ENCODE measurements at regions of chr3 and their contacts with region 1.

Region 1: DNA sequence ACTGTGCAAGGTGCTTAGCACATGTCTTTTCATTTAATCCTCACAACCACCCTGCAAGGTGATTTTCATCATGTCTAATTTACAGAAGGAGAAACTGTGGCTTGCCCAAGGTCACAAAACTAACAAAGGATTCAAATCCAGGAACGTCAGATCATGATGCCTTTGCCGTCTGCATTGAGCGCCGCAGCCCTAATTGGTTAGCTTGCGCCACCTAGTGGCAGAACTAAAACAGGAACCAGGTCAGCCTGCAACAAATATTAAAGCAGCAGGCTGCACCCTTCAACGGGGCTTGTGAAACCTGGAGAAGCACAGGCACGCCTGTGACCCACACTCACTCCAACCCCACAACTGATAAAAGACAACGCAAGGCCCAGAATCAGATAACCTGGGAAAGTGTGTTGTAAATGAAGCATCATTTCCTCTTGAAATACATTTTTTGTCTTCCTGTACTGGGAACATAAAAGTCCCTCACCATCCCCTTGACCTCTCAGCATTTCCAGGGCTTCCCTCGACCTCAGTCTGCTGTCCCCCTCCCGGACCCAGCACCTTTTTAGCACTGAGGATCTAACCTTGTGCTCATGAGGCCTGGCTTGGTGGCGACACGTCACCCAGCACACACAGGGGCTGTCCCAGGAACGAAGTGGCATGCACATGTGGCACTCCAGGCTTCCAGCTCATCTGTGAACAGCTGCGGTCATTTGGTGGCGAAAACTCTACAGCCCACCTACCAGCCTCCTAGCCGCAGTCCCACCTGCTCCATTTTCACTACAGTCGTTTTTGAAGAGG is 17.3 kb downstream of the DPH3 start:
- DNase-seq: peak; percentile 43
- ATAC-seq: peak; percentile 94
- H3K4me3 ChIP-seq: no peak overlapping the region
- H3K27ac ChIP-seq: no peak overlapping the region
- H3K4me1 ChIP-seq: peaks cover 7% of the 10 kb centered on the region
- H3K27me3 ChIP-seq: no peaks in the 10 kb centered on the region
- CTCF ChIP-seq: peak; percentile 84 to 97 (median 90)
- EP300 ChIP-seq: peak; percentile 29 to 50; a peak in 1 of 4 replicates
- POLR2A ChIP-seq: no peak
- RAD21 ChIP-seq: peak; percentile 94

Region 2: DNA sequence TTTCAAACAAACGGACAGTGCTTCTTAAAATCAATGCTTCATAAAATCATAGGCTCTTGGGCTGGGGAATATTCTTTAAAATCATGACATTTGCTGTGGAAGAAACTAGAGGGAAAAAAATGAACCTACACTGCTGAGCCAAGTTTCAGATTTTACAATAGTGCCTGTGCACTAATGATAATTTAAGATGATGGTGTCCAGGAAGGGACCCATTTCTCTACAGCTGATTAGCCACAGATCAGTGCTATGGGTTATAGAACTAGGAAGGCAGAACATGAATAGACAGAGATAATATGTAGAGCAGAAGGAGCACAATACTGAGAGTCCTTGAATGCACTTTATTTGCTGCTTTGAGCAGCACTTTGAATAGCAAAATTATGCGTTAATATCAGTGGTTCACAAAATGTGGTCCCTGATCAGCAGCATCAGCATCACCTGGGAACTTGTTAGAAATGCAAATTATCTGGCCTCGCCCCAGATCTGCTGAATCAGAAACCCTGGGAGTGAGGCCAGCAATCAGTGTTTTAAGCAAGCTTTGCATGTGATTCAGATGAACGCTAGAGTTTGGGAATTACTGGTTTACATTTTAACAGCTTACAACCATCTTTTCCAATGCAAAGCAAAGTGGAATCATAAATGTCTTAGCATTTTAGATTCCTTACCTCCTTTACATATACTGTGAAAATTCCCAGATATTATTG is 313.9 kb before region 1 on chr3:
- CTCF ChIA-PET with region 1: no interaction called
- POLR2A ChIA-PET with region 1: no interaction called
- RAD21 ChIA-PET with region 1: no interaction called
- SMC1A ChIA-PET with region 1: no interaction called
- in situ Hi-C with region 1: no loop called
- intact Hi-C with region 1: no loop called
- DNase-seq: no peak
- ATAC-seq: no peak
- H3K4me3 ChIP-seq: no peak overlapping the region
- H3K27ac ChIP-seq: no peak overlapping the region
- H3K4me1 ChIP-seq: no peaks in the 10 kb centered on the region
- H3K27me3 ChIP-seq: no peaks in the 10 kb centered on the region
- CTCF ChIP-seq: no peak
- EP300 ChIP-seq: no peak
- POLR2A ChIP-seq: no peak
- RAD21 ChIP-seq: no peak

Region 3: GRCh38 chr3:16177962-16178627 is 69.4 kb before region 1 on chr3:
- CTCF ChIA-PET with region 1: interaction called, 8 read pairs
- POLR2A ChIA-PET with region 1: no interaction called
- RAD21 ChIA-PET with region 1: interaction called, 3 read pairs
- SMC1A ChIA-PET with region 1: interaction called, 3 read pairs
- in situ Hi-C with region 1: no loop called
- intact Hi-C with region 1: loop called (anchors 1 kb)
- DNase-seq: no peak
- ATAC-seq: peak; percentile 96
- H3K4me3 ChIP-seq: no peak overlapping the region
- H3K27ac ChIP-seq: no peak overlapping the region
- H3K4me1 ChIP-seq: no peaks in the 10 kb centered on the region
- H3K27me3 ChIP-seq: peaks cover 0 to 3% of the 10 kb centered on the region in 2 experiments; a peak in 2 of 4 replicates
- CTCF ChIP-seq: peak; percentile 89 to 99 (median 98)
- EP300 ChIP-seq: no peak
- POLR2A ChIP-seq: no peak
- RAD21 ChIP-seq: peak; percentile 95

Region 4: DNA sequence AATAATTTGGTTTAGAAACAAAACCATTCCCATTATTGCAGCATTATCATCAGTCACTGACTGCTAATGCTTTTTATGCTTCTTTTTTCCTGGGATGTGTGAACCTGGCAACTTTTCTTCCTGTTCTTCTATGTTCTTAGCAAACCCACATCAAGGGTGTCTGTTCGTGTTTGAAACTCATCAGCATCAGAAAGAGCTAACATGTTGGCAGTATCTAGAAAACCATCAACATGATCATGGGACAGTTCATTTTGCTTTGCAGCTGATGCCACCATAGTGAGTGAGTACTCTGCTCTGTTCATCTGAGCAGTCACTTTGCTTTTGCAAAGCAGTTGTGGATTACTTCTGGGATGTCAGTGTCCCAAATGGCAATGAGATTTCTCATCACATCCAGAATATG is 11.4 kb after region 1 on chr3:
- CTCF ChIA-PET with region 1: interaction called, 35 read pairs
- POLR2A ChIA-PET with region 1: interaction called, 15 read pairs
- RAD21 ChIA-PET with region 1: no interaction called
- SMC1A ChIA-PET with region 1: interaction called, 43 read pairs
- in situ Hi-C with region 1: no loop called
- intact Hi-C with region 1: no loop called
- DNase-seq: no peak
- ATAC-seq: no peak
- H3K4me3 ChIP-seq: no peak overlapping the region
- H3K27ac ChIP-seq: no peak overlapping the region
- H3K4me1 ChIP-seq: no peaks in the 10 kb centered on the region; the same call in 1 of the 2 replicates
- H3K27me3 ChIP-seq: no peaks in the 10 kb centered on the region
- CTCF ChIP-seq: no peak
- EP300 ChIP-seq: no peak
- POLR2A ChIP-seq: no peak
- RAD21 ChIP-seq: no peak

Measured in GM12878 (cell line).